AG04449 (cell line): ENCODE measurements at regions of chr6 and their contacts with region 1.

Region 1: DNA sequence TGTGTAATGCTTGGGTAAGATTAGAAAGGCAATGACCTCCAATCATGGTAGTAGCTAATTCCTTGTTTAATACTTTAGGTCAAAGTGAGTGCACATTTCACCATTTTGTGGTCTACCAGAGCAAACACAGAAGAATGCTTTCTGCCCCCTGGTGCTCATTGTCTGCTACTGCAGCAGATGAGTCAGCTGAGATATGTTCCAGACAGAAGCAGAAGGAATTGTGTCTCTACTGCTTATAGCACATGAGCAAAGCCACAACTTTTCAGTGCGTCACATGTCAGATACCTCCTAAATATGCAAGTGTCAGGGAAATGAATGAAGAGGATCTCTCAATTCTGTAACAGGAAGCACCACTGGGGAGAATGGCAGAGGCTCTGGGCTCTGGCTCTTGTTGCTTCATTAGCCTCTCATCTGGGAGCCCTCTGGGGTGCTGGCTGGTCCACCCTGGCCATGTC is 308.9 kb downstream of the ALDH8A1 start:
- DNase-seq: peak; percentile 86
- H3K4me3 ChIP-seq: no peak overlapping the region
- CTCF ChIP-seq: peak; percentile 82

Region 2: DNA sequence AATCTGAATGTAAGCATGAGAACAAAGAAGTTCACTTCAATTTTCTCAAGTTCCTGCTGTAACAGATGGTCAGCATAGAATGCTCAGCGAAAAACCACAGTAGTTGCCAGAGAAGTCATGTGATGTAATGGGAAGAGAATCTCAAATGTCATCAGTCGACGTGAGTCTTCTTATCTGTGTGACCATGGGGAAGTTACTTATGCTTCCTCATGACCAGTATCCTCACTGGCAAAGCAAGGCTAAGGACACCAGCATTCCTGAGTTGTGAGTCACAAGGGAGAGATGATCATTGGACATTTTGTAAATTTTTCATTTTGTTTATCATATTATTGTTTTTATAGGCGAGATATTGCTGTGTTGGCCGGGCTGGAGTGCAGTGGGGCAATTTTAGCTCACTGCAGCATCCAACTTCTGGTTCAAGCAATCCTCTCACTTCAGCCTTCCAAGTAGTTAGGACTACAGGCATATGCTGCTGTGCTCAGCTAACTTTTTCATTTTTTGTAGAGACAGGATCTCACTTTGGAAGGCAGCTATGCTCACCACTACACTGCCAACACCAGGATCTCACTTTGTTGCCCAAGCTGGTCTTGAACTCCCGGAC is 344.9 kb before region 1 on chr6:
- CTCF ChIA-PET with region 1: interaction called, 10 read pairs
- POLR2A ChIA-PET with region 1: no interaction called
- DNase-seq: peak; percentile 100
- H3K4me3 ChIP-seq: no peak overlapping the region
- CTCF ChIP-seq: no peak

Region 3: DNA sequence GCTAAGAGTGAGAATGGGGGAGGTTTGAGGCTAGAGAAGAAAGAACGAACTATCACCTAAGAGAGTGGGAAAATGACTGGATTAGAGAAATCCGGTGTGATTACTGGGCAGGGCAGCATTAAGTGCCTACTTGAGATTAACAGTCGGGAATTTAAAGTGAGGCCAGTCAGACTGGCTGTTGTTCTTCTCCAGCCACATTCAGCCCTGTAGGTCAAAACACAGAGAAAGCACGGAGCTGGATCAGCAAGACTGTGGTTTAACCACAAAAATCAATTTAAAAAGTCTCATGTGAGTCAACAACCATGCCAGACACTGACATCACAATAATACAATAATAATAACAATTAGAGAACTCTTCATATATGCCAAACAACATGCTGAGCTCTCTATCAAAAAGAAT is 21.2 kb before region 1 on chr6:
- CTCF ChIA-PET with region 1: interaction called, 18 read pairs
- POLR2A ChIA-PET with region 1: no interaction called
- DNase-seq: peak; percentile 47
- H3K4me3 ChIP-seq: no peak overlapping the region
- CTCF ChIP-seq: no peak

Region 4: DNA sequence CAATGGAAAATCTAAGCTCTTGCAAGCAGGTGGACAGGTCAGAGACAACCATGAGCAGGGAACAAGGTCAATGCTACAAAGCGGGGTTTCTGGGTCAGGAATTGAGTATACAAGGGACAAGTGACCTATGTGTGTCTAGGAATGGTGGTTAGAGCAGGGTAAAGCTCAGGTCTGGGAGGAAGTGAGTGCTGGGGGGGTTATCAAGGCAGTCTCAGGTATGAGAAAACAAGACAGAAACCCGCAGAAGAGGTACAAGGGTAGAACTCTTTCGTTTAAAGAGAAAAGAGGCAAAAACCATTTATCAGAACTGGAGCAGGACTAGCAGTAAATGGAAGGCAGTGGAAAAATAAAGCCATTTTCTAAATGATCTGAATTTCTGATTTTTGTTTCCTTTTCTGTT is 10.5 kb after region 1 on chr6:
- CTCF ChIA-PET with region 1: interaction called, 24 read pairs
- POLR2A ChIA-PET with region 1: no interaction called
- DNase-seq: no peak
- H3K4me3 ChIP-seq: no peak overlapping the region
- CTCF ChIP-seq: no peak

Region 5: GRCh38 chr6:134666125-134666524 is 25.1 kb after region 1 on chr6:
- CTCF ChIA-PET with region 1: no interaction called
- POLR2A ChIA-PET with region 1: no interaction called
- DNase-seq: no peak
- H3K4me3 ChIP-seq: no peak overlapping the region
- CTCF ChIP-seq: no peak